CD8-positive, alpha-beta memory T cell (primary cell): ENCODE measurements at regions of chr1 and their contacts with region 1.

Region 1: DNA sequence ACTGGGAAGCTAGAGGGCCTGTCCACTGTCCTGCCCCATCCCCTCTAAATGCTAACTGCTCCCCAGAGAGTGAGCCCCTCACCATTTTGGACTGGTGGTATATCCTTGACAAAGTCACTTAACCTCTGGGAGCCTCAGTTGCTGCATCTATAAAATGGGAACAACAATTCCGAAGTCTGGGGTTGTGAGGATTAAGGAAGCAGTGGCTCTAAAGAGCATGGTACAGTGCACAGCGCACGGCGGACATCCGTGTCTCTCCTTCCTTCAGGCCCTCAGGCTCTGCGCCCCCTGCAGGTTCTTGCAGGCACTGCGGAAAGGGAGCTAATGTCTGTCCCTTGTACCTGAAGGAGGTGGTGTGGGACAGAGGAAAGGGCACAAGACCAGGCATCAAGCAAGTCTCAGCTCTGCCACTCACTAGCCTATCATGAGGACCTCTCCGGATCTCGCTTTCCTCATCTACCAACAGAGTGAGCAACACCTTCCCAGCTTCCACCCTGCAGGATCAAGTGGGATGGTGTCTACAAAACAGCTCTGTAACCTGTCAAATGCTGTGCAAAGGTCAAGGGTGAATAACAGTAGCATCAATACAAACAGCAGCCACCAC is 20.1 kb downstream of the ECE1 start:
- DNase-seq: peak; percentile 65 to 84 (median 73)
- H3K4me3 ChIP-seq: no peak overlapping the region
- H3K4me3 Mint-ChIP-seq: peak overlapping the region in 1 of 7 donors; percentile 70
- H3K27ac ChIP-seq: no peak overlapping the region
- H3K27ac Mint-ChIP-seq: peak overlapping the region; percentile 19 to 94 (median 71)
- H3K4me1 ChIP-seq: peaks cover 19% of the 10 kb centered on the region
- H3K4me1 Mint-ChIP-seq: peaks cover 9 to 39% (median 31%) of the 10 kb centered on the region in 3 donors
- H3K27me3 ChIP-seq: no peaks in the 10 kb centered on the region
- H3K27me3 Mint-ChIP-seq: no peaks in the 10 kb centered on the region

Region 2: DNA sequence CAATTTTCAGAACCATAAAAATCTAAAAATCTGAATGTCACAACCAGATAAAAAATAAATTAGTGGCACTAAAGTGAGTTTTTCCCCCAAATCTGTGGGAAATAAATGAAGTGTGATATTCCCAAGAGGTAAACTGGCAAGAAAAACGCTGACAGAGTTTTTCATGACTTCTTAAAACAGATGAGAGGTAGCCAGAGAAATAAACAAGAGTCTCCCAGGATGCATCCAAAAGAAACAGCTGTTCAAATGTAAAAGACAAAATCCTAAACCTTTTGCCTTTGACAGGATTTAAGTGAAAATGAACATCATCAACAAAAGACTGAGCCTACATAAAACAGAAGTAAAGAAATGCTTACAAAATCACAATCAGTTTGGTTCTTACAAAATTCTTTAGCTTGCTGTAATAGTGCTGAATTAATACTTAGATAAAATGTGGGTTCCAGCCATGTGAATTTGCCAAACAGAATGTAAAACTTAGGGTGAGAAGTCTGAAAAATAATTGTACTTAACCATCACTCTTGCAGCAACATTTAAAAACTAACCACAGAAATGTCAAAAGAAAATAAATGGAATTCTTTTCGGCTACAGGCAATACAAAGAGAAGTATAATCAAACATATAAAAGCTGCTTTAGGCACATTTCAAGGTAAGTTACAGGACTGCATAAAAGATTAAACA is 227.1 kb before region 1 on chr1:
- CTCF ChIA-PET with region 1: no interaction called
- POLR2A ChIA-PET with region 1: no interaction called
- DNase-seq: no peak
- H3K4me3 ChIP-seq: no peak overlapping the region
- H3K4me3 Mint-ChIP-seq: no peak overlapping the region
- H3K27ac ChIP-seq: no peak overlapping the region
- H3K27ac Mint-ChIP-seq: peak overlapping the region in 1 of 8 donors; percentile 69
- H3K4me1 ChIP-seq: no peaks in the 10 kb centered on the region
- H3K4me1 Mint-ChIP-seq: peaks cover 0 to 5% (median 0%) of the 10 kb centered on the region in 3 donors
- H3K27me3 ChIP-seq: no peaks in the 10 kb centered on the region
- H3K27me3 Mint-ChIP-seq: no peaks in the 10 kb centered on the region

Region 3: GRCh38 chr1:21244986-21245687 is 25.1 kb before region 1 on chr1:
- CTCF ChIA-PET with region 1: interaction called, 10 read pairs
- POLR2A ChIA-PET with region 1: no interaction called
- DNase-seq: no peak
- H3K4me3 ChIP-seq: no peak overlapping the region
- H3K4me3 Mint-ChIP-seq: no peak overlapping the region
- H3K27ac ChIP-seq: no peak overlapping the region
- H3K27ac Mint-ChIP-seq: peak overlapping the region in 1 of 8 donors; percentile 52
- H3K4me1 ChIP-seq: no peaks in the 10 kb centered on the region
- H3K4me1 Mint-ChIP-seq: peaks cover 0 to 2% (median 0%) of the 10 kb centered on the region in 3 donors
- H3K27me3 ChIP-seq: no peaks in the 10 kb centered on the region
- H3K27me3 Mint-ChIP-seq: no peaks in the 10 kb centered on the region

Region 4: DNA sequence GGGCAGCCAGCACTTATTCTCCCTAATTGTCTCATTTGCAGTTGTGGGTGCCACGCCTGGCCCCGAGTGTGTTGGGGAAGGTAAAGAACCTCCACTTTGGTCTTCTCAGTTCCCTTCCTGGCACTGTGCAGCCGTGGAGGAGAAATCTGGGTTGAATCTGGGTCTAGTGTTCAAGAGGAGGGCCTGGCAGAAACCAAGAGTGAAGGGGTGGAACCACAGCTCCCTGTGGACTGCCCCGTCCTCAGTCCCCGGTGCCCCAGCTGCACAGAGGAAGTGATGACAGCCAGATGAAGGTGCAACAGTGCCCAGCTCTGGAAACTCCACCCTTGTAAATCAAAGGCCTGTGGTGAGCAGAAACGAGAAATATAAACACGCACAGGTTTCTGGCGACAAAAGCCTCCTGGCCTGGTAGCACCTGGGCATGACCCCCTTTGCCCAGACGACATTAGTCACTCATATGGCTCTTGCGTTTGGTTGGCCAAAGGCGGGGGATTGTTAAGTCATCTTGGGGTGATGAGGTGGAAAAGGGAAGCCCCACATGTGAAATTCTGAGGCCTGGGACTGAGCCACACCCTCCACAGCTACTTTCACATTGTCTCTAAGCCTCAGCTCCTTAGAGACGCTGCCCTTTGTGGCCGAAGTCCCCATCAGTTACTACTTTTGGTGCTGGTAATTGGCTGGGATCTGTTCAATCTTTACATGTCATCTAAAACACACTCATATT is 24.2 kb after region 1 on chr1:
- CTCF ChIA-PET with region 1: interaction called, 39 read pairs
- POLR2A ChIA-PET with region 1: interaction called, 4 read pairs
- DNase-seq: peak; percentile 77 to 97 (median 90)
- H3K4me3 ChIP-seq: peak overlapping the region; percentile 78
- H3K4me3 Mint-ChIP-seq: peak overlapping the region; percentile 86 to 97 (median 92)
- H3K27ac ChIP-seq: peak overlapping the region; percentile 77
- H3K27ac Mint-ChIP-seq: peak overlapping the region; percentile 97 to 100 (median 99)
- H3K4me1 ChIP-seq: peaks cover 82% of the 10 kb centered on the region
- H3K4me1 Mint-ChIP-seq: peaks cover 71 to 90% (median 90%) of the 10 kb centered on the region in 3 donors
- H3K27me3 ChIP-seq: no peaks in the 10 kb centered on the region
- H3K27me3 Mint-ChIP-seq: peaks cover 0 to 2% of the 10 kb centered on the region in 2 donors

Region 5: DNA sequence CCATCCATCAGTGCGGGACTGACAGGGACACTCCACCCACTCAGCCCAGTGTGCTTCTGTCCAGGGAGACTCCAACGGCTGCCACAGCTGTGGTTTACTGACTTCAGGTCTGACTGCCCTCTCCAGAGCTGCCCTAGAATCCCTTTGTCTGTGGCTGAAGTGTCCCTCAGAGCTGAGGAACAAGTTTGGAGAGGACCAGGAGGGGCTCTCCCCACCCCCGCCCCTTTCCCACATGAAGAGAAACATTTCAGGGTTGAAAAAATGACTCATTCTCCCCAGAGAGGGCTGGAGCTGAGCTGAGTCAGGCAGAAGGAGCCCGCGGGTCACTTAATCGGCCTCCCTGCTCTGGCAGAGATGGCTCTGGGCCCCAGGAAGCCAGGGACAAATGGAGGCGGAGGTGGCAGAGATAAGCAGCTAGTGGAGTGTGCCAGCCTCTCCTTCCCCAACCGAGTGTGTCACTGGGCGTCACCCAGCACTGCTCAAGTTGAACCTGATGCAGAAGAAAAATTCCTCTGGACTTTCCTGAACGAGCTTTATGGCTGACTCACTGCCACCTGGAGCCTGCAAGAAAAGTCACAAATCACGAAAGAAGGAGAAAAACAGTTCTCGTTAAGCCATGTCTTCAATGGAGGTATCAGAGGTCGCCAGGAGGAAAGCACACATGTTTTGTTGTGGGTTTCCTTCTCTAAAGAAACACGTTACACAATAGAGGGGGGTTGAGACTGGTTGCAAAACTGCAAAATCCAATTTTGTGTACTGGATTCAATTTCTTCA is 54.4 kb after region 1 on chr1:
- CTCF ChIA-PET with region 1: interaction called, 8 read pairs
- POLR2A ChIA-PET with region 1: interaction called, 16 read pairs
- DNase-seq: peak in 4 of 5 donors; percentile 22 to 62 (median 44)
- H3K4me3 ChIP-seq: peak overlapping the region; percentile 16
- H3K4me3 Mint-ChIP-seq: peak overlapping the region; percentile 38 to 91 (median 79)
- H3K27ac ChIP-seq: no peak overlapping the region
- H3K27ac Mint-ChIP-seq: peak overlapping the region; percentile 82 to 95 (median 91)
- H3K4me1 ChIP-seq: peaks cover 61% of the 10 kb centered on the region
- H3K4me1 Mint-ChIP-seq: peaks cover 47 to 81% (median 73%) of the 10 kb centered on the region in 3 donors
- H3K27me3 ChIP-seq: no peaks in the 10 kb centered on the region
- H3K27me3 Mint-ChIP-seq: no peaks in the 10 kb centered on the region

Region 6: GRCh38 chr1:21344750-21345443 is 74.7 kb after region 1 on chr1:
- CTCF ChIA-PET with region 1: interaction called, 15 read pairs
- POLR2A ChIA-PET with region 1: no interaction called
- DNase-seq: peak in 1 of 5 donors; percentile 55
- H3K4me3 ChIP-seq: peak overlapping the region; percentile 93
- H3K4me3 Mint-ChIP-seq: peak overlapping the region; percentile 86 to 91 (median 88)
- H3K27ac ChIP-seq: peak overlapping the region; percentile 59
- H3K27ac Mint-ChIP-seq: peak overlapping the region; percentile 61 to 93 (median 82)
- H3K4me1 ChIP-seq: peaks cover 53% of the 10 kb centered on the region
- H3K4me1 Mint-ChIP-seq: peaks cover 37 to 45% (median 41%) of the 10 kb centered on the region in 3 donors
- H3K27me3 ChIP-seq: no peaks in the 10 kb centered on the region
- H3K27me3 Mint-ChIP-seq: no peaks in the 10 kb centered on the region